Activated naive CD4-positive, alpha-beta T cell treated with anti-CD3 and anti-CD28 coated beads for 36 hours (primary cell): ENCODE measurements at regions of chr16 and their contacts with region 1.

Region 1: GRCh38 chr16:50326949-50327402 is 41.8 kb downstream of the BRD7 start:
- DNase-seq: peak; percentile 81
- H3K4me3 Mint-ChIP-seq: no peak overlapping the region
- H3K27ac Mint-ChIP-seq: peak overlapping the region; percentile 50
- H3K4me1 Mint-ChIP-seq: peaks cover 56% of the 10 kb centered on the region
- H3K27me3 Mint-ChIP-seq: no peaks in the 10 kb centered on the region

Region 2: DNA sequence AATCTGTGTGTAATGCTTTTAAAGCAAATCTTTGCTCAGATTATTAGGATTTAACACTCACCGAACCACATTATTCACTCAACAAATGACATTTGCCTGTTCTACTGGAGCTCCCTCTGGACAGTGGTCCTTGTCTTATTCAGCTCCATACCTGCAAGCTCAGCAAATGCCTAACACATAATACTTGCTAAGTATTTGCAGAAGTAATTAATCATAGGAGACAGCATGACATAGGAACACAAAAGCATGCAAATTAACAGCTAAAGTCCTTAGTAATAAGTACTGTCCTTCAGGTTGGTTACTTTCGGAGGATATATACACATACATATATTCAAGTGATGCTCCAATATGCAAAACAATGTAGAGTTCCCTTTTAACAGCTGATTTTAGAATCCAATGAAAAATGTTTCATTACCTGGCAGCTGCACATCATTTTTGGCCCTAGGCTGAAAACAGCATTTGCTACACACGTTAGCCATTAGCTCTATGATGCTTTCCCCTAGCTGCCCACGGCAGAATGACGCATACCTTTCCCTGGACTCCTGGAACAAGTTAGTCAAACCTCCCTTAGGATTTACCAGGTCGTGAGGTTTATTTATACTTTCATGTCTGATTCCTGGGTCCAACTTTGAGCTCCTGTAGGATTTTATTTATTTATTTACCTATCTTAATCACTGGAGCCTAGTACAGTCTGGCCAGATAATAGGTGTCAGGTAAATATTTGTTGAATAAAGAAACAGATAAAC is 33.2 kb after region 1 on chr16:
- CTCF ChIA-PET with region 1: interaction called, 149 read pairs
- intact Hi-C with region 1: loop called (anchors 1 kb)
- DNase-seq: no peak
- H3K4me3 Mint-ChIP-seq: no peak overlapping the region
- H3K27ac Mint-ChIP-seq: no peak overlapping the region
- H3K4me1 Mint-ChIP-seq: peaks cover 48% of the 10 kb centered on the region
- H3K27me3 Mint-ChIP-seq: no peaks in the 10 kb centered on the region

Region 3: GRCh38 chr16:50368410-50369132 is 41.6 kb after region 1 on chr16 and contains the start of gene BRD7:
- CTCF ChIA-PET with region 1: interaction called, 8 read pairs
- intact Hi-C with region 1: loop called (anchors 1 kb)
- DNase-seq: peak; percentile 62
- H3K4me3 Mint-ChIP-seq: peak within 1 kb of the TSS; percentile 96
- H3K27ac Mint-ChIP-seq: peak within 1 kb of the TSS; percentile 86
- H3K4me1 Mint-ChIP-seq: peaks cover 46% of the 10 kb centered on the region
- H3K27me3 Mint-ChIP-seq: no peaks in the 10 kb centered on the region
- total RNA-seq, gene BRD7: 96.7 to 101 TPM

Region 4: GRCh38 chr16:50489182-50489581 is 162.2 kb after region 1 on chr16:
- CTCF ChIA-PET with region 1: no interaction called
- intact Hi-C with region 1: no loop called
- DNase-seq: no peak
- H3K4me3 Mint-ChIP-seq: no peak overlapping the region
- H3K27ac Mint-ChIP-seq: no peak overlapping the region
- H3K4me1 Mint-ChIP-seq: no peaks in the 10 kb centered on the region
- H3K27me3 Mint-ChIP-seq: no peaks in the 10 kb centered on the region

Region 5: DNA sequence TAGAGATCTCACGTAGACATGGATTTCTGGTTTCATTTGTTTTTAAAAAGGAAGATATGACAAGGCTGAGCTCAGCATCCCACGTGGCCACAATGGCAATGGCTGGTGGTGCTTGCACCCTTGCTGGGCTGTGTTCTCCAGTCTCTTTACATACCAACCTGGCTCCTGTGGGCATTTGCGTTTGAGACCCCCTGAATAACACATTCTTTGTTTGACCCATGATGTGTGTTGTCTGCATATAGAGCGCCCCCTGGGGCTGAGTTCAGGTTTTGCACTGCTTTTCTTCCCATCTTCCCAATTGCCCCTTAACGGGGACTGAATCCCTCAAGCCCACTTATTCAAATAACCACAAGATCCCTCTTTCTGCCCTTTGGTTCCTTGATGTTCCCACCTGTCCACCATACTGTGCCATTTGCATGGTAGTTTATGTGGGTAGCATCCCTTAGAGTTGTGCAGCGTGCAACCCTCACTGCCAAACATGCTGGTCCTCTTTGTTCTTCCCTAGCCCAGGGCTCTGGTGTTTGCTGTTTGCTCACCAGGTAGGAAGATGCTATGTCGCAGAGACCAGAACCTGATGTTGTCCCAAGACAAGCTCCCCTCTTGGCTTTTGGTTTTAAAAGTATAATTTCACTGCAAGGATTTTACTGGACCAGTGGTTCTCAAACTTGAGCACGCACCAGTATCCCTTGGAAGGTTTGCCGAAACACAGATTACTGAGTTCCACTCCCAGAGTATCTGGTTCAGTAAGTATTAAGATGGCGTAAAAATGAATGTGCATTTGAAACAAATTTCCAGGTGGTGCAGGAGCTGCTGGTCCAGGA is 182.8 kb after region 1 on chr16:
- CTCF ChIA-PET with region 1: interaction called, 3 read pairs
- intact Hi-C with region 1: loop called (anchors 1 kb)
- DNase-seq: peak; percentile 67
- H3K4me3 Mint-ChIP-seq: no peak overlapping the region
- H3K27ac Mint-ChIP-seq: no peak overlapping the region
- H3K4me1 Mint-ChIP-seq: no peaks in the 10 kb centered on the region
- H3K27me3 Mint-ChIP-seq: no peaks in the 10 kb centered on the region